ENCODE measurements at regions of chr7 and their contacts with region 1.

Region 1: GRCh38 chr7:50335795-50336754 is 31.6 kb downstream of the IKZF1 start:
- DNase-seq: peak; percentile 86
- ATAC-seq: peak; percentile 16
- H3K4me3 Mint-ChIP-seq: no peak overlapping the region
- H3K27ac Mint-ChIP-seq: no peak overlapping the region
- H3K4me1 Mint-ChIP-seq: no peaks in the 10 kb centered on the region
- H3K27me3 Mint-ChIP-seq: no peaks in the 10 kb centered on the region

Region 2: DNA sequence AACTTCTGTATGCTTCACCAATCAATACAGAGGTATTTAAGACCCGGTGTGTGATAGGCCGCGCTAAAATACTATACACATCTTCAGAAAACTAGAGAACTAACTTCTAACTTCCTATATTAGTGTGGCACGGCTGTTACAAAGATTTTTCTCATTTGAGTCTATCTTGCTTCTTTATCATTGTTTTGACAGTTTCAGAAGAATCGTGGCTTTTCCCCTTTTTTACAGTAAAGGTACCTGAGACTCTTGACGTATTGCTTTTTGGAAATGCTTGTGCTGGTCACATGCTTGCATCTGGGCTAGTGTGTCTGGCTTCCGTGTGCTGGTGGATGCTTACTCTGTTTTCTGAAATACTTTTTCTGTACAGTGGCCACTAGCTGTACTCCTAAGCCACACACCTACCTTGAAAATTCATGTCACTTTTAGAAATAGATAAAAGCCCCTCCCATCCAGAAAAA is 18.8 kb before region 1 on chr7:
- CTCF ChIA-PET with region 1: interaction called, 74 read pairs
- POLR2A ChIA-PET with region 1: interaction called, 69 read pairs
- DNase-seq: peak; percentile 71
- ATAC-seq: peak; percentile 71
- H3K4me3 Mint-ChIP-seq: peak overlapping the region; percentile 76
- H3K27ac Mint-ChIP-seq: peak overlapping the region; percentile 93
- H3K4me1 Mint-ChIP-seq: peaks cover 94% of the 10 kb centered on the region
- H3K27me3 Mint-ChIP-seq: no peaks in the 10 kb centered on the region

Region 3: DNA sequence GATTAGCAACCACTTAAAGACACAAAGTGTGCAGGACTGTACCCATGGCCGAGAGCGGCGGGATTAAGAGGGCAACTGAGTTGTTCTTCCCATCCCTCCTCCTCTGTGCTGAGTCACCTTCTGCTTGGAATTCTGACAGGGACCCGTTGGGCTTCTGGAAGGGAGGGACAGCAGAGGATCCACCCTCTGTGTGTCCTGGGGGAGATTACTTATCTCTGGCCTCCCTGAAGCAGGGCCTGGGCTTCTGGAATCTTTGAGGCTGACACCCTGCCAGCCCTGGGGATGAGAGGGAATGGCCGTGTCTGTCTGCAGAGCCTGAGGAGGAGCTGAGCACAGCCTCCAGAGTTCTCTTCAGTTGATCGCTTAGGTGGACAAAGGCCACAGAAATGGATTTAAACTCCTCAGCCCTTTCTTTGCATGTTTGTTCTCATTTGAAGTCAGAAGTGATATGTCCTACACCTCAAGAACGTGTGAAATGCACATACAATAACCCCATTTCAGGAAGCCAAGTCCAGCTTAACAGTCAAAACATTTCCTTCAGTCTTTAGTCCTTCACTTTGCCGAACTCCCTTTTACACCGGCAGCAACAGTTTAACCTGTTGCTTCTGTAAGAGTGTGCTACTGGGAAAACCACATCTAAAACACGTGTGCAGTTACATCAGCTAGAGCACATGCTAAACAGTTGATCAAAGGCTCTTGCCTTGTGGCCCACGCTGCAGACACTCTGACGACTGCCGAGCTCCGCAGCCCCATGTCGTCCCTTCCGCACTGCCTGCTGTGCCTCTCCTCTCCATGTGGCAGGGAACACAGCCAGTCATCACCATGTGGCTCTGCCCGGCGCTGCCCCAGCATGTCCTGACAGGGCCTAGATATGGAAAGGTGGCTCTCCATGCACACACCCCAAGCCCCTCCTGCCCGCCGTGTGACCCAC is 24.2 kb after region 1 on chr7:
- CTCF ChIA-PET with region 1: interaction called, 322 read pairs
- POLR2A ChIA-PET with region 1: interaction called, 75 read pairs
- DNase-seq: peak; percentile 89
- ATAC-seq: peak; percentile 87
- H3K4me3 Mint-ChIP-seq: peak overlapping the region; percentile 68
- H3K27ac Mint-ChIP-seq: peak overlapping the region; percentile 96
- H3K4me1 Mint-ChIP-seq: peaks cover 96% of the 10 kb centered on the region
- H3K27me3 Mint-ChIP-seq: no peaks in the 10 kb centered on the region

Region 4: DNA sequence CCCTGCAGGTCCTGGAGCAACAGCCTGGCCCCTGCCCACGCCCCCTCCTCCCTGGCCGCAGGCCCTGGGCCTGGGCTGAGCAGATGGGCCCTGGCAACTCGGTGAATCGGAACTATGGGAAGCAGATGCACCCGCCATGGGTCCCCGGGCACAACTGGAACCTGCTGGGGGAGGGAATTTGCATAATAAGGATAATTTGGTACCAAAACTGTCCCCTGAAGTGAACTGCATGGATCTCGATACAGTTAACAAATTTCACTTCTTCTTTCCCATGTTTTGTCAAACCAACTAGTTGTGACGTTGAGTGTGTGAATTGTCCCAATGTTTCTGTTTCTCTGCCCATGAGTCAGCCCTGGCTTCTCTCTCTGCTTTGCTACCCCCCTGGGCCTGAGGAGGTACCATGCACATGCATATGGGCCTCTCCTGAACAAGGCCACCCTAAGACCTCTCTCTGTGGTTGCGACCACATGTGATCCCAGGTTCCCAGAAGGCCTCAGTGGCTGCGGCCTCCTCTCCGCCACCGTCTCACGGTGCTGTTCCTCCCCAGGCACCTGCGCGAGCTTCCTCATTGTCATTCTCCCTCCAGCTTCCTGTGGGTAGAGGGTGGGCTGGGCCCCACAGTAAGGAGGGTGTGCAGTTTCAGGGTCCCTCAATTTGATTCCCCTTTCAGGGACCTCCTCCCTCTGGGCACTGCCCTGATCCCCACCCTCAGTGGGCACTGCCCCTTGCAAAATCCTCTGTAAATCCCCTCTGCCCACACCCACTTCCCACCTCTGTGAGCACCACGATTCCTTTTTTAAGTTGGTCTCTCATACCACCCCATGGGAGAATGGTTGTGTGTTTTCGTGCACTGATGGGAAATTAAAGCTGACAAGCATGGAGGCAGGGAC is 74.0 kb after region 1 on chr7:
- CTCF ChIA-PET with region 1: no interaction called
- POLR2A ChIA-PET with region 1: no interaction called
- DNase-seq: no peak
- ATAC-seq: peak; percentile 37
- H3K4me3 Mint-ChIP-seq: peak overlapping the region; percentile 42
- H3K27ac Mint-ChIP-seq: peak overlapping the region; percentile 80
- H3K4me1 Mint-ChIP-seq: peaks cover 49% of the 10 kb centered on the region
- H3K27me3 Mint-ChIP-seq: no peaks in the 10 kb centered on the region

Region 5: GRCh38 chr7:50467817-50468610 is 131.9 kb after region 1 on chr7:
- CTCF ChIA-PET with region 1: no interaction called
- POLR2A ChIA-PET with region 1: no interaction called
- DNase-seq: peak; percentile 88
- ATAC-seq: peak; percentile 96
- H3K4me3 Mint-ChIP-seq: peak overlapping the region; percentile 47
- H3K27ac Mint-ChIP-seq: peak overlapping the region; percentile 71
- H3K4me1 Mint-ChIP-seq: peaks cover 10% of the 10 kb centered on the region
- H3K27me3 Mint-ChIP-seq: peaks cover 4% of the 10 kb centered on the region